B cell (primary cell): ENCODE measurements at regions of chr5 and their contacts with region 1.

Region 1: GRCh38 chr5:141825791-141826560 is 52.2 kb downstream of the PCDH1 start:
- DNase-seq: peak; percentile 19
- ATAC-seq: no peak
- H3K4me3 ChIP-seq: no peak overlapping the region
- H3K4me3 Mint-ChIP-seq: no peak overlapping the region
- H3K27ac ChIP-seq: no peak overlapping the region
- H3K27ac Mint-ChIP-seq: no peak overlapping the region
- H3K4me1 ChIP-seq: no peaks in the 10 kb centered on the region
- H3K4me1 Mint-ChIP-seq: no peaks in the 10 kb centered on the region
- H3K27me3 ChIP-seq: no peaks in the 10 kb centered on the region
- H3K27me3 Mint-ChIP-seq: peaks cover 36% of the 10 kb centered on the region
- CTCF ChIP-seq: peak; percentile 24

Region 2: DNA sequence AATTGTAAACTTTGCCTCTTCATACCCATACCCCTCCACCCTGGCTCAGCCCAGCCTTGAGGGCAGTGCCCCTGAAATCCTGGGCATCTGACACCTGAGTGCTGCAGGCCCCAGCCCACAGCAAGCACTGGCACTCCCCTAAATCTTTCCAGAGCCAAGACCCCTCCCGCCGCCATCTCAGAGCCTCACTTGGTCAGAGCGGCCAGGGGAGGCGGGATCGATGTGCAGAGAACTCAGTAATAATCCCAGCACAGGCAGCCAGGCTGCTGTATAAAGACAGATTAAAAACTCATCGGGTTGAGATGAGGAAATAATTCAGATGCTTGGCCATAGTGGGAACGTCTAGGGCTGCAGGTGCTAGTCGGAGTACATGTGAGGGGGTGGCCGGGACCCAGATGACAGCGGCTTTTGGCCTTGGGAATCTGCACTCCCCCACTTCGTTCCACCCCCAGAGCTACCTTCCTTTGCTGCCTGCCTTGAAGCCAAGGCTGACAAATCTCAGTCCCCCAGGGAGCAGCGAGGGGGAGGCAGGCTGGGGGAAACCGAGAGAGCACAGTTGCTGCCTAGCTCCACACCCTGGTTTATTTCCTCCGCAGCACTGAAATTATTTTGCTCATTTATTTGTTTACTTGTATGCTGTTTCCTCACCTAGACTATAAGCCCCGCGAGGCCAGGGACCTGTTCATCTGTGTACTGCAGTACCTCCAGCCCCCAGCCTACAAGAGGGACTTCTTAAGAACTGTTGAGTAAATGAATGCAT is 124.4 kb before region 1 on chr5:
- CTCF ChIA-PET with region 1: interaction called, 3 read pairs
- POLR2A ChIA-PET with region 1: no interaction called
- intact Hi-C with region 1: loop called (anchors 1 kb)
- DNase-seq: no peak
- ATAC-seq: peak; percentile 23
- H3K4me3 ChIP-seq: peak overlapping the region in 4 of 5 experiments; percentile 56 to 72 (median 63)
- H3K4me3 Mint-ChIP-seq: no peak overlapping the region
- H3K27ac ChIP-seq: no peak overlapping the region
- H3K27ac Mint-ChIP-seq: no peak overlapping the region
- H3K4me1 ChIP-seq: peaks cover 22 to 36% of the 10 kb centered on the region in 2 donors
- H3K4me1 Mint-ChIP-seq: peaks cover 23% of the 10 kb centered on the region
- H3K27me3 ChIP-seq: peaks cover 0 to 72% (median 58%) of the 10 kb centered on the region in 4 experiments
- H3K27me3 Mint-ChIP-seq: peaks cover 49% of the 10 kb centered on the region
- CTCF ChIP-seq: no peak

Region 3: GRCh38 chr5:141811287-141812155 is 14.5 kb before region 1 on chr5:
- CTCF ChIA-PET with region 1: interaction called, 13 read pairs
- POLR2A ChIA-PET with region 1: no interaction called
- intact Hi-C with region 1: no loop called
- DNase-seq: peak; percentile 48
- ATAC-seq: peak; percentile 67
- H3K4me3 ChIP-seq: no peak overlapping the region
- H3K4me3 Mint-ChIP-seq: no peak overlapping the region
- H3K27ac ChIP-seq: no peak overlapping the region
- H3K27ac Mint-ChIP-seq: no peak overlapping the region
- H3K4me1 ChIP-seq: no peaks in the 10 kb centered on the region
- H3K4me1 Mint-ChIP-seq: no peaks in the 10 kb centered on the region
- H3K27me3 ChIP-seq: peaks cover 0 to 36% (median 9%) of the 10 kb centered on the region in 4 experiments
- H3K27me3 Mint-ChIP-seq: peaks cover 65% of the 10 kb centered on the region
- CTCF ChIP-seq: peak; percentile 72